ENCODE measurements at regions of chr10 and their contacts with region 1.

Region 1: GRCh38 chr10:16828114-16828568 is 10.9 kb upstream of the RSU1 start:
- DNase-seq: peak in 8 of 9 experiments; percentile 47 to 87 (median 63)
- ATAC-seq: peak; percentile 96
- H3K4me3 ChIP-seq: no peak overlapping the region
- H3K4me3 Mint-ChIP-seq: no peak overlapping the region
- H3K27ac ChIP-seq: no peak overlapping the region
- H3K27ac Mint-ChIP-seq: peak overlapping the region; percentile 45
- H3K4me1 ChIP-seq: no peaks in the 10 kb centered on the region
- H3K4me1 Mint-ChIP-seq: peaks cover 4% of the 10 kb centered on the region
- H3K27me3 ChIP-seq: no peaks in the 10 kb centered on the region
- H3K27me3 Mint-ChIP-seq: no peaks in the 10 kb centered on the region
- CTCF ChIP-seq: peak; percentile 69

Region 2: DNA sequence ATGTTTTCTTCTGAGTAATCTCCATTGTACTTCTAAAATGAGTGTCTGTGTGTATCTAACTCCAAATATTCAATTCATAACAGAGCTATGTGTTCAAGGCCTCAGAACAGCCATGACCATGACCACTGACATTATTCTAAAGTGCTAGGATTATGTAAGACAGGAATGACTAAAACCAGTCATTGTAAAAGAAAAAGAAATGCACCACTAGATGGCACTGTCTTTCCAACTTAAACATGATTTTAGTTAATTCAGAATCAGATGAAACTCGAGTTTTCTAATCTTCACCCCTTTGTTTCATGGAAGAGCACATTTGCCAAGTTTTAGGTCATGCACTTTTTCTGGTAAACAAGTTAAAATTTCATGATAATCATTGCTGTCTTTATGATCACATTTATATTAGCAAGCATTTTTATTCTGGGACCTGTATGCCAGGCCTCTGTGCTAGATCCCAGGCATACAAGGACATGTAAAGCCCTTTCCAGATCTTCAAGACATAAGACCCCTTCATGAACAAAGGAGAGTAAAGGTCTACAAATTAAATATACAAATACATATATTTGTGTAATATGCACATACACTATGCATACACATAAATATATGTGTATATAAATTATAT is 15.2 kb after region 1 on chr10:
- CTCF ChIA-PET with region 1: interaction called, 23 read pairs
- POLR2A ChIA-PET with region 1: no interaction called
- intact Hi-C with region 1: loop called in 1 of 2 experiments (anchors 1 kb)
- DNase-seq: peak in 3 of 9 experiments; percentile 16 to 78 (median 63)
- ATAC-seq: peak; percentile 51
- H3K4me3 ChIP-seq: no peak overlapping the region
- H3K4me3 Mint-ChIP-seq: no peak overlapping the region
- H3K27ac ChIP-seq: no peak overlapping the region
- H3K27ac Mint-ChIP-seq: no peak overlapping the region
- H3K4me1 ChIP-seq: no peaks in the 10 kb centered on the region
- H3K4me1 Mint-ChIP-seq: no peaks in the 10 kb centered on the region
- H3K27me3 ChIP-seq: no peaks in the 10 kb centered on the region
- H3K27me3 Mint-ChIP-seq: no peaks in the 10 kb centered on the region
- CTCF ChIP-seq: peak; percentile 72

Region 3: GRCh38 chr10:17265468-17265867 is 437.3 kb after region 1 on chr10:
- CTCF ChIA-PET with region 1: interaction called, 11 read pairs
- POLR2A ChIA-PET with region 1: no interaction called
- intact Hi-C with region 1: no loop called
- DNase-seq: no peak
- ATAC-seq: no peak
- H3K4me3 ChIP-seq: no peak overlapping the region
- H3K4me3 Mint-ChIP-seq: no peak overlapping the region
- H3K27ac ChIP-seq: no peak overlapping the region
- H3K27ac Mint-ChIP-seq: no peak overlapping the region
- H3K4me1 ChIP-seq: no peaks in the 10 kb centered on the region
- H3K4me1 Mint-ChIP-seq: no peaks in the 10 kb centered on the region
- H3K27me3 ChIP-seq: no peaks in the 10 kb centered on the region
- H3K27me3 Mint-ChIP-seq: peaks cover 11% of the 10 kb centered on the region
- CTCF ChIP-seq: no peak

Measured in CD8-positive, alpha-beta T cell (primary cell).